ENCODE measurements at regions of chr15 and their contacts with region 1.

Region 1: GRCh38 chr15:49721621-49722020 is 100.8 kb downstream of the DTWD1 start:
- DNase-seq: no peak
- H3K4me3 ChIP-seq: no peak overlapping the region
- CTCF ChIP-seq: no peak

Region 2: DNA sequence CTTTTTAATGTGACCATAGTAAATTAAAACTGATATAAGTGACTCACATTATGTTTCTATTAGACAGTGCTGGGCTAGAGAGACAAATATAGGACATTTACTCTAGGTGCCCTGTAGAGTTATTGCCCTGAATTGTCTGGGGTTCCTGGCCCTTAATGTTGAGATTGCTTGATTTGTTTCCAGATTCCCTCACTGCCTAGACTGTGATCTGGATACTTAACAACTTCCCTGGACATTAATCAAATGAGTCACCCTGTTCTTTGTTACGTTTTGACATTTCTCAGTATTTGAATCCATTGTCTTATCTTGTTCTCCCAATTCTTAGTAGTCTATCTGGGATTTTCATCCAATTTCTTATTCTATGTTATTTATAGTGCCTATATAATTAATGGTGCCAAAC is 35.0 kb before region 1 on chr15:
- in situ Hi-C with region 1: loop called (anchors 5 kb)
- DNase-seq: peak; percentile 15
- H3K4me3 ChIP-seq: no peak overlapping the region
- CTCF ChIP-seq: no peak